Mammary epithelial cell (primary cell): ENCODE measurements at regions of chr11 and their contacts with region 1.

Region 1: DNA sequence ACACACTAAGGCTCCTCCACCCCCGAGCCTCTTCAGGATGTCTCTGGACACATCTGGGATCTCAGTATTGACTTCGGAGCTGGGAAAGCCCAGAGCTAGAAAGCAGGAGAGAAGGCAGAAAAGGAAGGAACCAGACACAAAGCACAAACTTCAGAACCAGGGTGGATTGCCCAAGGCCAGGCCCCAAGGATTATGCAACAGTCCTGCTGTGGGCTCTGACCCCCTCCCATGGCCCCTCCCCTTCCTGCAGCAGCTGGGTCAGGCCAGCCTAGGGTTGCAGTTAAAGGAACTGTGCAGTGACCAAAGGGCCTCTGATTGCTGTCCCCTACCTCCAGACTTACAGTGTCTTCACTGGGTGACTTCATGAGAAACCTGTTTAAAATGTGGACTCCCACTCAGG is 5.3 kb downstream of the KCNE3 start:
- DNase-seq: no peak
- H3K4me3 ChIP-seq: no peak overlapping the region
- H3K27ac ChIP-seq: no peak overlapping the region
- H3K4me1 ChIP-seq: peaks cover 1% of the 10 kb centered on the region
- H3K27me3 ChIP-seq: peaks cover 3% of the 10 kb centered on the region
- CTCF ChIP-seq: no peak

Region 2: DNA sequence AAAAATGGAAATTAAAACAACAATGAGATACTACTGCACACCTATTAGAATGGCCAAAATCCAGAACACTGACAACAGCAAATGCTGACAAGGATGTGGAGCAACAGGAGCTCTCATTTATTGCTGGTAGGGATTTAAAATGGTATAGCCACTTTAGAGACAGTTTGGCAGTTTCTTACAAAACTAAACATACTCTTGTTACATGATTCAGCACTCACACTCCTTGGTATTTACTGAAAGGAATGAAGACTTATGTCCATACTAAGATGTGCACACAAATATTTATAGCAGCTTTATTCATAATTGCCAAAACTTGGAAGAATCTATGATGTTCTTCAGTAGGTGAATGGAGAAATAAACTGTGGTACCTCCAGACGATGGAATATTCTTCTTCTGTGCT is 104.6 kb before region 1 on chr11:
- CTCF ChIA-PET with region 1: no interaction called
- dilution Hi-C with region 1: loop called (anchors 5 kb)
- in situ Hi-C with region 1: no loop called
- intact Hi-C with region 1: no loop called
- DNase-seq: no peak
- H3K4me3 ChIP-seq: no peak overlapping the region
- H3K27ac ChIP-seq: no peak overlapping the region
- H3K4me1 ChIP-seq: no peaks in the 10 kb centered on the region
- H3K27me3 ChIP-seq: no peaks in the 10 kb centered on the region
- CTCF ChIP-seq: no peak

Region 3: GRCh38 chr11:74559110-74559933 is 97.3 kb after region 1 on chr11:
- CTCF ChIA-PET with region 1: no interaction called
- dilution Hi-C with region 1: loop called (anchors 5 kb)
- in situ Hi-C with region 1: no loop called
- intact Hi-C with region 1: no loop called
- DNase-seq: no peak
- H3K4me3 ChIP-seq: no peak overlapping the region
- H3K27ac ChIP-seq: no peak overlapping the region
- H3K4me1 ChIP-seq: no peaks in the 10 kb centered on the region
- H3K27me3 ChIP-seq: peaks cover 5% of the 10 kb centered on the region
- CTCF ChIP-seq: no peak

Region 4: GRCh38 chr11:74611369-74611861 is 149.4 kb after region 1 on chr11:
- CTCF ChIA-PET with region 1: no interaction called
- dilution Hi-C with region 1: no loop called
- in situ Hi-C with region 1: no loop called
- intact Hi-C with region 1: no loop called
- DNase-seq: peak; percentile 22
- H3K4me3 ChIP-seq: no peak overlapping the region
- H3K27ac ChIP-seq: no peak overlapping the region
- H3K4me1 ChIP-seq: no peaks in the 10 kb centered on the region
- H3K27me3 ChIP-seq: no peaks in the 10 kb centered on the region
- CTCF ChIP-seq: peak; percentile 41 to 57